ENCODE measurements at regions of chr1 and their contacts with region 1.

Region 1: DNA sequence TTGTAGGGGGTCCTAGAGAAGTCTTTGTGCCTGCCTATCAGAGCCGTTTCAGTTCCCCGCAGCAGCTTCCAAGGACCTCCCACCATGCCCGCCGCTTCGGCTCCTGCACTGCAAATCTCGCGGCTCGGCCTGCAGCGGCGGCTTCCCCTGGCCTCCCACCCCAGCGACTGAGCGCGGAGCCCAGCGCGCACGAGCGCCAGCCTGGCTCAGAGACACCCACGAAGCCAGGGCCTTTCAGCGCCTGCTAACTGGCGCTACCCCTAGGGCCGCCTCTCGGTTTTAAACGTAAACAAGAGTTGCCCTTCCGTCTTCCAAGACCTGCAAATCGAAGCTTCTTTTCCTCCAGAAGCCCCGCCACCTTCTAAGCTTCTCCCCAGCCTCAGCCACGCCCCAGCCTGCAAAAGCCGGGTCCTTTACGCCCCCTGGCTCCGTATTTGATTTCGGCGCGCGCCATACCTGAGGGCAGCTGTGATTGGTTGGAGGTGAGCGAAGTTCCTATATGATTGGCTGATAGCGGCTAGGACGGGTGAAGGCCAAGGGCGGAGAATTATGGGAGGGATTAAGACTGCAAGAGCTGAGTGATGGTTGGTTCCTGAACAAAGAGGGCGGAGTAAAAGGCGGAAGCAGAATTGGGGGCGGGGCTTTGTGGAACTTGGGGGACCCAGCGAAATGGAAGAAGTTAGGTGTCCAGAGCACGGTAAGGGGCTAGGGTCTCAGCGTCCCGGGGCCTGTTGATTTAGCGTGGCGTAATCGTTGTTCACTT is at the start of gene TTF2:
- DNase-seq: peak; percentile 88 to 99 (median 93)
- ATAC-seq: peak; percentile 90
- H3K4me3 ChIP-seq: peak within 1 kb of the TSS; percentile 91
- H3K4me3 Mint-ChIP-seq: no peak within 1 kb of the TSS
- H3K27ac ChIP-seq: peak within 1 kb of the TSS; percentile 71 to 87
- H3K27ac Mint-ChIP-seq: no peak within 1 kb of the TSS
- H3K4me1 ChIP-seq: peaks cover 18% of the 10 kb centered on the region
- H3K4me1 Mint-ChIP-seq: peaks cover 46% of the 10 kb centered on the region
- H3K27me3 ChIP-seq: no peaks in the 10 kb centered on the region
- H3K27me3 Mint-ChIP-seq: no peaks in the 10 kb centered on the region
- CTCF ChIP-seq: peak; percentile 31
- total RNA-seq, gene TTF2: 35.4 to 36.6 TPM

Region 2: GRCh38 chr1:116724765-116725375 is 335.0 kb before region 1 on chr1:
- CTCF ChIA-PET with region 1: interaction called, 3 read pairs
- POLR2A ChIA-PET with region 1: interaction called, 3 read pairs
- intact Hi-C with region 1: loop called in 1 of 2 experiments (anchors 1 kb)
- DNase-seq: peak; percentile 56 to 90 (median 72)
- ATAC-seq: no peak
- H3K4me3 ChIP-seq: no peak overlapping the region
- H3K4me3 Mint-ChIP-seq: no peak overlapping the region
- H3K27ac ChIP-seq: no peak overlapping the region
- H3K27ac Mint-ChIP-seq: no peak overlapping the region
- H3K4me1 ChIP-seq: peaks cover 3% of the 10 kb centered on the region
- H3K4me1 Mint-ChIP-seq: peaks cover 22% of the 10 kb centered on the region
- H3K27me3 ChIP-seq: no peaks in the 10 kb centered on the region
- H3K27me3 Mint-ChIP-seq: no peaks in the 10 kb centered on the region
- CTCF ChIP-seq: peak; percentile 97

Region 3: GRCh38 chr1:116763787-116764465 is 295.9 kb before region 1 on chr1:
- CTCF ChIA-PET with region 1: no interaction called
- POLR2A ChIA-PET with region 1: interaction called, 37 read pairs
- intact Hi-C with region 1: loop called in 1 of 2 experiments (anchors 10 kb)
- DNase-seq: peak in 6 of 14 experiments; percentile 20 to 74 (median 52)
- ATAC-seq: peak; percentile 18
- H3K4me3 ChIP-seq: peak overlapping the region; percentile 31
- H3K4me3 Mint-ChIP-seq: peak overlapping the region; percentile 83
- H3K27ac ChIP-seq: peak overlapping the region; percentile 88 to 89
- H3K27ac Mint-ChIP-seq: peak overlapping the region; percentile 99
- H3K4me1 ChIP-seq: peaks cover 96% of the 10 kb centered on the region
- H3K4me1 Mint-ChIP-seq: peaks cover 97% of the 10 kb centered on the region
- H3K27me3 ChIP-seq: no peaks in the 10 kb centered on the region
- H3K27me3 Mint-ChIP-seq: no peaks in the 10 kb centered on the region
- CTCF ChIP-seq: peak; percentile 52

Region 4: DNA sequence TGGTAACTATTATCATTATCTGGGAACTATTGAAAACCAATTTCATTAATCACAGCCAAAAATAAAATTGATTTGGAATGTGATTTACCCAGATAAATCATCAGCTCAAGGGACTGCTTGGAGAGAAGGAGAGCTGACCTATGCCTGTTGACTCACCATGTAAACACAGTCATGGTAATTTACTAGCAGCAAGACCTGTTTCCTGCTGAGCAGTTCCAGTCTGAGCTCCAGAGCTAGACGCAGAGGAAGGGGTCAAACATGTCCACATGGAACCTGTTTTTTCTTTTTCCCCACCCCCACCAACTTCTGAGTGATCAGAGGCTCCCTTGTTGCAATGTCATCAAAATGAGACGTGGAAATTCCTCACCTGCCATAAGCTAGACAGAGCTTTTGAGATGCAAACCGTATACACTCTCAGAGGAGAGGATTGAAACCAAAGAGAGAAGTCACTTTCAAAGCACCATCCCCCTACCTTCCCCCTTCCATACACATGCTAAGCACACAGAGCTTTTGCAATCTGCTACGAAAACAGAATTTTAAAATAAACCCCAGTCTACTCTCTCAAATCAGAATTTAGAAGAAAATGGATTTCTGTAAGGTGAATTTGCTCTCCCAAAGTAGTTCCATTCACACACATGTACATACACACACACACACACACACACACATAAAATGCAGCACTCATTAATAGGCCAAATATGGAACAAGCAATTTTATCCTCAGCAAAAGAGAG is 206.0 kb before region 1 on chr1:
- CTCF ChIA-PET with region 1: interaction called, 3 read pairs
- POLR2A ChIA-PET with region 1: interaction called, 4 read pairs
- intact Hi-C with region 1: loop called (anchors 1 to 2 kb)
- DNase-seq: peak in 2 of 14 experiments; percentile 18 to 35
- ATAC-seq: no peak
- H3K4me3 ChIP-seq: no peak overlapping the region
- H3K4me3 Mint-ChIP-seq: no peak overlapping the region
- H3K27ac ChIP-seq: no peak overlapping the region
- H3K27ac Mint-ChIP-seq: no peak overlapping the region
- H3K4me1 ChIP-seq: peaks cover 6% of the 10 kb centered on the region
- H3K4me1 Mint-ChIP-seq: peaks cover 24% of the 10 kb centered on the region
- H3K27me3 ChIP-seq: no peaks in the 10 kb centered on the region
- H3K27me3 Mint-ChIP-seq: no peaks in the 10 kb centered on the region
- CTCF ChIP-seq: no peak

Region 5: GRCh38 chr1:117009132-117009531 is 50.7 kb before region 1 on chr1:
- CTCF ChIA-PET with region 1: no interaction called
- POLR2A ChIA-PET with region 1: interaction called, 11 read pairs
- intact Hi-C with region 1: no loop called
- DNase-seq: peak in 3 of 14 experiments; percentile 43 to 59 (median 45)
- ATAC-seq: peak; percentile 54
- H3K4me3 ChIP-seq: no peak overlapping the region
- H3K4me3 Mint-ChIP-seq: peak overlapping the region; percentile 62
- H3K27ac ChIP-seq: no peak overlapping the region
- H3K27ac Mint-ChIP-seq: peak overlapping the region; percentile 93
- H3K4me1 ChIP-seq: peaks cover 38% of the 10 kb centered on the region
- H3K4me1 Mint-ChIP-seq: peaks cover 74% of the 10 kb centered on the region
- H3K27me3 ChIP-seq: no peaks in the 10 kb centered on the region
- H3K27me3 Mint-ChIP-seq: no peaks in the 10 kb centered on the region
- CTCF ChIP-seq: no peak

Region 6: GRCh38 chr1:117895482-117896114 is 835.7 kb after region 1 on chr1:
- CTCF ChIA-PET with region 1: no interaction called
- POLR2A ChIA-PET with region 1: no interaction called
- intact Hi-C with region 1: loop called (anchors 5 to 10 kb)
- DNase-seq: peak; percentile 8 to 72 (median 38)
- ATAC-seq: peak; percentile 41
- H3K4me3 ChIP-seq: no peak overlapping the region
- H3K4me3 Mint-ChIP-seq: no peak overlapping the region
- H3K27ac ChIP-seq: no peak overlapping the region
- H3K27ac Mint-ChIP-seq: no peak overlapping the region
- H3K4me1 ChIP-seq: no peaks in the 10 kb centered on the region
- H3K4me1 Mint-ChIP-seq: no peaks in the 10 kb centered on the region
- H3K27me3 ChIP-seq: no peaks in the 10 kb centered on the region
- H3K27me3 Mint-ChIP-seq: no peaks in the 10 kb centered on the region
- CTCF ChIP-seq: peak; percentile 91